ENCODE measurements at regions of chr10 and their contacts with region 1.

Region 1: DNA sequence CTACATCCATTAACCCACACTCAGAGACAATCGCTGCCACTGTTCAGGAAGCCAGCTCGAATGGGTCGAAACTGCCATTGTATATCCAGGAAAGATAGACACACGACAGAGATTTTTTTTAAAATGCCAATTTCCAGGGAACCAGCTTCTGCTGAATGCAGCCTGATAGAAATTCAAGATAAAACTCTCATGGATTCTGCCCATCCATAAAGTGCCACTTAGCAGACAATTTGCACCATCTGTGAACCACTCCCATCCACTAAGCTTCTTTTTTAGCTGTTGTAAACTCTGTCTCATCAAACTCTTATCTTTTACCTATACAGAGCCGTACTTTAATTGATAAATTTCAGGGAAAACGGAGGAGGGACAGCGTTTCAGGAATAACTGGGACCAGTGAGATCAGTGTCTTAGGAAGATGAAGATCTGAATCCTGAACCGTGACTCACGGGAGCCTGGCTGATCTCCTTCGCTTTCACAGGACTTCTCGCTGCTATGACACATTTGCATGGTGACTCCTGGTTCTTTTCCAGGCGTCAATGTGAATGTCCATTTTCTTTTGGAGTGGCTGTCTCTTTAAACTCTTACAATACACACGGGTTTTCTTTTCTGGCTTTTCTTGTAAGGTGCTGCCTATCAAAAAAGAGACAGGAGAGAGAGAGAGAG is 103.4 kb downstream of the FAM204A start:
- DNase-seq: no peak
- H3K4me3 ChIP-seq: no peak overlapping the region
- H3K27ac ChIP-seq: no peak overlapping the region
- H3K4me1 ChIP-seq: no peaks in the 10 kb centered on the region
- H3K27me3 ChIP-seq: peaks cover 97% of the 10 kb centered on the region
- CTCF ChIP-seq: no peak

Region 2: DNA sequence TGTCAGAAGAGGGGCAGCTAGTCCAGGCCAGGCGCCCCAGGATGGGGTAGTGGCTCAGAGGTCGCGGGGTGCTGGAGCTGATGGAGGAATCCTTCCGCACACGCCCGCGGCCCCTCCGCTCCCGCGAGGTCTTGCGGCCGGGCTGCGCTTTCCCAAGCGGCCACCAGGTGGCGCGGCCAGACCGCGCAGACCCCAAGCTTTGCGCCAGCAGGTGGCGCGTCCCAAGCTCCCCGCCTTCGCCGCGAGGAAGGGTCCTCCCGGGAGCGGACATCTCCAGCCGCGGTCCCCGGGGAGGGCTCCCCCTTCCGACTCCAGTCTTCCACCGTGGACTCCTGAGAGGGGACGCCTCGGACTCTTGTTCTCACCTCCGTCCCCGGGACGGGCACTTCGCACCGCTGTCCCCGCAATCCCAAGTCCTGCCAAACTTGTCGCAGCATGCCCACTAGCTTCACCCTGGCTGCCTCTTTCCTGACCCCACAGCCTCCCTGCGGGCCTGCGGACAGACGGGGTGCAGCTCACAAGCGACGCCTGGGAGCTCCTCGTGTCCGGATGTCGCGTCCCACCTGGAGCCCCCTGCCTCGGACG is 1022.0 kb before region 1 on chr10:
- intact Hi-C with region 1: loop called (anchors 5 kb)
- DNase-seq: peak; percentile 66
- H3K4me3 ChIP-seq: peak overlapping the region; percentile 57
- H3K27ac ChIP-seq: no peak overlapping the region
- H3K4me1 ChIP-seq: peaks cover 12% of the 10 kb centered on the region
- H3K27me3 ChIP-seq: peaks cover 86% of the 10 kb centered on the region
- CTCF ChIP-seq: peak; percentile 100

Region 3: DNA sequence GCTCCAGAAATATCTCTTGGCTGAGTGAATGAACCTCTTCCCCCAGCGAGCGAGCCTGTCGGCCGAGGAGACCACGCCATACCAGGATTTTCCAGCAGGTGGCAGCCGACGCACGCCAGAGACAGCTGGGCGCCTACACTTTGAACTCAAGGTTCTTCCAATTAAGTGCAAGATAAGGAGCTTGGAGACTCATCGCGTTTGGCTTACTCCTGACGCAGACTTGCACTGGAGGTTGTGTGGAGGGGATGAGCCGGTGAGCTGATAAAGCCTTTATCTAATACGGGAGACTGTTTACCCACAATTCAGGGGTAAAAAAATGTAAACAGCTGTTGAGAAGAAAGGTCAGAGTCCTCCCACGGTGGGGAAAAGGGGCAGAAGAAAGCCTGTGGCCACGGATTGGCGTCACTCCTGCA is 742.1 kb before region 1 on chr10:
- intact Hi-C with region 1: loop called (anchors 5 kb)
- DNase-seq: peak; percentile 76
- H3K4me3 ChIP-seq: no peak overlapping the region
- H3K27ac ChIP-seq: no peak overlapping the region
- H3K4me1 ChIP-seq: no peaks in the 10 kb centered on the region
- H3K27me3 ChIP-seq: peaks cover 56% of the 10 kb centered on the region
- CTCF ChIP-seq: peak; percentile 98

Region 4: GRCh38 chr10:118332236-118332635 is 93.5 kb after region 1 on chr10:
- intact Hi-C with region 1: no loop called
- DNase-seq: no peak
- H3K4me3 ChIP-seq: no peak overlapping the region
- H3K27ac ChIP-seq: no peak overlapping the region
- H3K4me1 ChIP-seq: peaks cover 17% of the 10 kb centered on the region
- H3K27me3 ChIP-seq: no peaks in the 10 kb centered on the region
- CTCF ChIP-seq: no peak

Region 5: DNA sequence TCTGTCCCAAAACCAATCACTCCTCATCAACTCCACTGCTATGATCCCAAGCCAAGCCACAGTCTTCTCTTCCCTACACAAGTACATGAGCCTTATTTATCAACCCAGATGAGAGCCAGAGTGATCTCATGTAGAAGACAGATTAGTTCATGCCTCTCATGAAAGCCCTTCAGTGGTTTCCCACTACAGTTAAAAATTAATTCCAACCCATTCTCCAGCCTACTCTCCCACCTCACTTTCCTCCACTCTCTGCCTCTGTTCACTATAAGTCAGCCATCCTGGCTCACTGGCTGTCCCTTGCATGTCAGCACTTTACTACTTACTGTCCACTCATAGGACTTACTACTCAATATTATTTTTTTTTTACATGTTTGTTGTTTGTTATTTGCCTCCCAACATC is 448.8 kb after region 1 on chr10:
- intact Hi-C with region 1: no loop called
- DNase-seq: no peak
- H3K4me3 ChIP-seq: no peak overlapping the region
- H3K27ac ChIP-seq: no peak overlapping the region
- H3K4me1 ChIP-seq: no peaks in the 10 kb centered on the region
- H3K27me3 ChIP-seq: no peaks in the 10 kb centered on the region
- CTCF ChIP-seq: no peak